BJ (cell line): ENCODE measurements at regions of chr15 and their contacts with region 1.

Region 1: DNA sequence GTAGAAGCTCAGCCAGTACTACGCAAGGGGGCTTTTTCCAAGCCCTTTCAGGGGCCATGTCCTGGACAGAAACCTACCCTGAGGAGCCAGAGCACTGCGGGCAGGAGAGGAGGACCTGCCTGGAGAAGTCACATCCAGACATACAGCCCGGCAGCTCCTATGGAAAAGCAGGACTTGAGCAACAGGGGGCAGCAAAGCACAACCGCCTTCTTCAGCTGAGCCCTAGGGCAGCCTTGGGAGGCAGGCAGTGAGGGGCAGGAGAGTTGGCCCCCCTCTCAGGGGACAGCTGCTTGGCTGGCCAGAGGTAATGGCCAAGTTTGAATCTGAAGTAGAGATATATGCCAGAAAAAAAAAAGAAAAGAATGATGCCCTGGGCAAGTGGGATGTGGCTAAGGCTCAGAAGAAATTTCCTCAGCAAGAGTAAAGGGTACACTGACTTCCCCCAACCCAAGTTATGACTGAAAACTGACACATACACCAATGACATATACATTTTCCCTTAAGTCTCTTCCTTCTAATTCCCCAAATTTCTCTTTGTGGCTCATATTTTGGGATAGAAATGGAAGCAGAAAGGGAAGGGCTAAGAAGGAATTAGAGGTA is 56.9 kb downstream of the CYP19A1 start:
- DNase-seq: no peak
- H3K4me3 ChIP-seq: no peak overlapping the region
- H3K27me3 ChIP-seq: peaks cover 5% of the 10 kb centered on the region; the same call in 1 of the 2 replicates
- CTCF ChIP-seq: peak; percentile 82

Region 2: GRCh38 chr15:51227940-51228783 is 53.3 kb before region 1 on chr15:
- CTCF ChIA-PET with region 1: interaction called, 32 read pairs
- POLR2A ChIA-PET with region 1: no interaction called
- DNase-seq: peak; percentile 67
- H3K4me3 ChIP-seq: no peak overlapping the region
- H3K27me3 ChIP-seq: no peaks in the 10 kb centered on the region
- CTCF ChIP-seq: no peak

Region 3: DNA sequence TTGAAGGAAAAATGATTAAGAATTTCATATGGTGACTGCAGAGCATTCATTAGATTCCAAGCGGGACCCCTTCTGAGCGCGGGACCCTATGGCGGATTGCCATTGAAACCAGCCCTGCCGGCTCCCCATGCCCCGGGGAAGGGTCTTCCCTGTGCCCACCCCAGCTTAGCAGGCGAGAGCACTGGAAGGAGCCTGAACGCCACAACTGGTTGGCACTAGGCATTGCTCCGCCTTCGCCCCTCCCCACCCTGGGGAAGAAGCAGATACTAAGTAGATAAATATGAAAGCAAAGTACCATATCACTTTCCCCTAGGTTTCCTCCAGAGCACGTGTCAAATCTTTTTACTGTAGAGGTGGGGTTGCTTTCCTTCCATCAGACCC is 13.8 kb before region 1 on chr15:
- CTCF ChIA-PET with region 1: interaction called, 16 read pairs
- POLR2A ChIA-PET with region 1: interaction called, 12 read pairs
- DNase-seq: no peak
- H3K4me3 ChIP-seq: peak overlapping the region; percentile 34
- H3K27me3 ChIP-seq: peaks cover 8% of the 10 kb centered on the region
- CTCF ChIP-seq: no peak

Region 4: DNA sequence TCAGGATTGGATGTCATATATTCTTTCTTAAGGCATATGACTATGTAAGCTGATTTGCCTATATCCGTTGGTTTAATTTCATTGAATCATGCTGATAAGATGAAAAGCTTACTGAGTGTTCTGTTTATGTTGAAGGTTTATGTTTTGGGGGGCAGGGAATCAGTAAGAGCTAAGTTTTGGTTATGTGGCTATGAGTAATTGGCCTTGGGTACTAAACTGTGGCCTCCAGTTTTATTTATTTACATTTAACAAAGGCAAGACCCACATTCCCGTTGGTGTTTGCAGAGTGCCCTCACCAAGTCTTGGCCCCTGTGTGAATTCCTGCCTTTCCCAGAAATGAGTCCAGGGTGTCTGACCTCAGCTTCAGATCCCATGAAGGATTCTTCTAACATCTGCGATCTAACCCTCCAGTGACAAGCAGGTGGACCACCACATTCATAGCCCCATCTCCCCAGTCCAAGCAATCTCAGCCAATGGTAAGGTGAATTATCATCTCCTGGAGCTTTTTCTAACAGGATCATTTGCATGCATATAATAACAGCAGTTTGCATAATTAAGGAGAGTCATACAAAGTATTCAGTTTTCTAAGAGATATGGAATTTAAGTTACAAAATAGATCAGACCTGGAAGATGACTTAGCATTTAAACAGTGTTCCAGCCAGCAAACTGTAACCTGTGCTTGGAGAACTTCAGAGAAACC is 87.4 kb after region 1 on chr15:
- CTCF ChIA-PET with region 1: interaction called, 290 read pairs
- POLR2A ChIA-PET with region 1: no interaction called
- DNase-seq: no peak
- H3K4me3 ChIP-seq: no peak overlapping the region
- H3K27me3 ChIP-seq: no peaks in the 10 kb centered on the region; the same call in 1 of the 2 replicates
- CTCF ChIP-seq: no peak

Region 5: GRCh38 chr15:51380999-51381795 is 99.7 kb after region 1 on chr15:
- CTCF ChIA-PET with region 1: interaction called, 290 read pairs
- POLR2A ChIA-PET with region 1: no interaction called
- DNase-seq: no peak
- H3K4me3 ChIP-seq: no peak overlapping the region
- H3K27me3 ChIP-seq: peaks cover 2% of the 10 kb centered on the region; the same call in 1 of the 2 replicates
- CTCF ChIP-seq: peak; percentile 88

Region 6: GRCh38 chr15:51390966-51391432 is 109.5 kb after region 1 on chr15:
- CTCF ChIA-PET with region 1: interaction called, 17 read pairs
- POLR2A ChIA-PET with region 1: no interaction called
- DNase-seq: no peak
- H3K4me3 ChIP-seq: no peak overlapping the region
- H3K27me3 ChIP-seq: no peaks in the 10 kb centered on the region; the same call in 1 of the 2 replicates
- CTCF ChIP-seq: no peak

Region 7: GRCh38 chr15:51401872-51402517 is 120.5 kb after region 1 on chr15:
- CTCF ChIA-PET with region 1: interaction called, 23 read pairs
- POLR2A ChIA-PET with region 1: no interaction called
- DNase-seq: no peak
- H3K4me3 ChIP-seq: no peak overlapping the region
- H3K27me3 ChIP-seq: peaks cover 13% of the 10 kb centered on the region
- CTCF ChIP-seq: peak; percentile 79

Region 8: DNA sequence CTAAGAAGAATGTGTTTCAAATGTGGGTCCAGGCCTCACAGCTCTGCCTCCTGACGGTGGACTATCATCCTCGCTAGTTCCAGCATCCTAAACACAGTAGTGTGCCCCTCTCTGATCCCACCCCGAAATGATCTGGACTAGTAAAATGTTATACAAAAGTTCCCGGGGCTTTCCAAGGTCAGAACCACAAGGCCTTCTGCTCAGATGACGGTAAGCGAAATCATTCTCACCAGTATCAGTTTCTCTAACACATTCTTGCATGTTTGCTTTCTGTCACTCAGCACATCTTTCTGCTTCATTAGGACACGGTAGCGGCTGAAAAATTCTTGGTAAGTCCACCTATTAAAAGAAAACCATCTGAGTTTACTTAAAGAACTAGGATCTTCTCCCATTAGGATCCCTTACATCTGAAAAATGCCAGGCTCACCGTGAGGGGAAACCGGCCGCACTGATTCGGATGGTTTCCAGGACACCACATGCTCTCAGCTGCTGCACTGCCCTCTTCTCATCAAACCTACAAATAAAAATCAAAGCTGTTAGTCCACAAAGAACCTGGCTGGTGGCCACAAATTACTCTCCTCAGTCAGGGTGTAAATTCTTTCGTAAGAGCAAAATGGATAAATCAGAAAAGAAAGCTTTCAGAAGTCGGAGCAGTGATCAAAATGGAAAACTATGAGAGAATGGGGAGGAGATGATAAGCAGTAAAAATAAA is 1098.1 kb after region 1 on chr15:
- CTCF ChIA-PET with region 1: no interaction called
- POLR2A ChIA-PET with region 1: no interaction called
- DNase-seq: no peak
- H3K4me3 ChIP-seq: no peak overlapping the region
- H3K27me3 ChIP-seq: no peaks in the 10 kb centered on the region
- CTCF ChIP-seq: no peak